Activated naive CD8-positive, alpha-beta T cell treated with anti-CD3 and anti-CD28 coated beads, Interleukin-2, amount 10 ng/mL, durations not matched to agents 7 days and 5 days (primary cell): ENCODE measurements at regions of chr6 and their contacts with region 1.

Region 1: DNA sequence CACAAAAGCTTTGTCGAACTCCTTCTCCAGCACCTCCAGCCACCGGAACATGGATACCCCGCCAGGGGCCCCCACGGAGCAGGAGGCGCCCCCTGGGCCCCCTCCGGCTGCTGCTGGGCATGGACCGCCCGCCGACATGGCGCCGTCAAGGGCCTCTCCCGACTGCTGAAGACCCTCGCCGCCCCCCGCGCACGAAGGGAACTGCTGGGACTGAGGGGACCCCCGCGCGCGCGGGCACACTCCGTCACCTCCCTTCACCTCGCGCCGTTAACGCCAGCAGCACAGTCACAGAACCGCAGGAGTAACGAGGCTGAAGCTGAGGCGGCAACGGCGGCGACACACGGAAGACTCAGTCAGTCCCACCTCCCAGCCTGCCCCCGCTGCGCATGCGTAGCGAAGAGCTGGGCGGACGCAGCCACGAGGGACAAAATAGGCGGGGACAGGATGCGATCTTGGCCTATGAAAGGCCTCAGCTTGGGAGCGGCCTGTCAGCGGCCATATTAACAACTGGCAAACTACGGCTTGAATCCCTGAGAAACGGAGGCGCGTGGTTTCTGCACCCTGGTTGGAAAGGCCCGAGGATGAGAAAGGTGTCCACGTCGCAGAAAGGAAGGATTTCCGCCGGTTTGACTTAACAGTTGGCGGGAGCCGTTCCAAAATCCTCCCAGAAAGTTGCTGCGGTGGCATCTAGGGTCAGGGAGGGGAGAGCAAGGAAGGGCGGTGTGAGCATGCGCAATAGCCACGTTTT is at the start of gene GOPC:
- DNase-seq: peak; percentile 92
- ATAC-seq: peak; percentile 98
- H3K4me3 Mint-ChIP-seq: peak within 1 kb of the TSS; percentile 100
- H3K27ac Mint-ChIP-seq: peak within 1 kb of the TSS; percentile 100
- H3K4me1 Mint-ChIP-seq: peaks cover 26% of the 10 kb centered on the region
- H3K27me3 Mint-ChIP-seq: no peaks in the 10 kb centered on the region
- total RNA-seq, gene GOPC: 25.8 to 25.9 TPM

Region 2: GRCh38 chr6:117482240-117483003 is 119.9 kb before region 1 on chr6 and contains the start of gene DCBLD1:
- POLR2A ChIA-PET with region 1: interaction called, 10 read pairs
- DNase-seq: peak; percentile 74
- ATAC-seq: peak; percentile 82
- H3K4me3 Mint-ChIP-seq: peak within 1 kb of the TSS; percentile 91
- H3K27ac Mint-ChIP-seq: peak within 1 kb of the TSS; percentile 81
- H3K4me1 Mint-ChIP-seq: peaks cover 20% of the 10 kb centered on the region
- H3K27me3 Mint-ChIP-seq: peaks cover 41% of the 10 kb centered on the region
- total RNA-seq, gene DCBLD1: 5.6 to 6.2 TPM

Region 3: GRCh38 chr6:117547688-117548621 is 54.4 kb before region 1 on chr6:
- POLR2A ChIA-PET with region 1: interaction called, 20 read pairs
- DNase-seq: peak; percentile 62
- ATAC-seq: peak; percentile 48
- H3K4me3 Mint-ChIP-seq: peak overlapping the region; percentile 83
- H3K27ac Mint-ChIP-seq: peak overlapping the region; percentile 84
- H3K4me1 Mint-ChIP-seq: peaks cover 37% of the 10 kb centered on the region
- H3K27me3 Mint-ChIP-seq: peaks cover 2% of the 10 kb centered on the region

Region 4: GRCh38 chr6:117613920-117614560 is 11.7 kb after region 1 on chr6:
- POLR2A ChIA-PET with region 1: interaction called, 16 read pairs
- DNase-seq: no peak
- ATAC-seq: peak; percentile 73
- H3K4me3 Mint-ChIP-seq: peak overlapping the region; percentile 36
- H3K27ac Mint-ChIP-seq: no peak overlapping the region
- H3K4me1 Mint-ChIP-seq: peaks cover 11% of the 10 kb centered on the region
- H3K27me3 Mint-ChIP-seq: peaks cover 11% of the 10 kb centered on the region